ENCODE measurements at regions of chr10 and their contacts with region 1.

Region 1: GRCh38 chr10:24174014-24174413 is 34.9 kb upstream of the KIAA1217 start:
- DNase-seq: no peak
- ATAC-seq: no peak
- H3K4me3 ChIP-seq: no peak overlapping the region
- H3K27ac ChIP-seq: no peak overlapping the region
- H3K4me1 ChIP-seq: peaks cover under 1% of the 10 kb centered on the region
- H3K27me3 ChIP-seq: no peaks in the 10 kb centered on the region
- CTCF ChIP-seq: no peak

Region 2: GRCh38 chr10:23263441-23264164 is 910.4 kb before region 1 on chr10:
- intact Hi-C with region 1: no loop called
- DNase-seq: no peak
- ATAC-seq: no peak
- H3K4me3 ChIP-seq: no peak overlapping the region
- H3K27ac ChIP-seq: no peak overlapping the region
- H3K4me1 ChIP-seq: no peaks in the 10 kb centered on the region
- H3K27me3 ChIP-seq: peaks cover 0 to 2% (median 0%) of the 10 kb centered on the region in 3 donors
- CTCF ChIP-seq: no peak

Region 3: GRCh38 chr10:23742368-23742767 is 431.6 kb before region 1 on chr10:
- intact Hi-C with region 1: loop called in 1 of 2 experiments (anchors 5 kb)
- DNase-seq: no peak
- ATAC-seq: no peak
- H3K4me3 ChIP-seq: no peak overlapping the region
- H3K27ac ChIP-seq: no peak overlapping the region
- H3K4me1 ChIP-seq: no peaks in the 10 kb centered on the region
- H3K27me3 ChIP-seq: no peaks in the 10 kb centered on the region
- CTCF ChIP-seq: no peak

Region 4: DNA sequence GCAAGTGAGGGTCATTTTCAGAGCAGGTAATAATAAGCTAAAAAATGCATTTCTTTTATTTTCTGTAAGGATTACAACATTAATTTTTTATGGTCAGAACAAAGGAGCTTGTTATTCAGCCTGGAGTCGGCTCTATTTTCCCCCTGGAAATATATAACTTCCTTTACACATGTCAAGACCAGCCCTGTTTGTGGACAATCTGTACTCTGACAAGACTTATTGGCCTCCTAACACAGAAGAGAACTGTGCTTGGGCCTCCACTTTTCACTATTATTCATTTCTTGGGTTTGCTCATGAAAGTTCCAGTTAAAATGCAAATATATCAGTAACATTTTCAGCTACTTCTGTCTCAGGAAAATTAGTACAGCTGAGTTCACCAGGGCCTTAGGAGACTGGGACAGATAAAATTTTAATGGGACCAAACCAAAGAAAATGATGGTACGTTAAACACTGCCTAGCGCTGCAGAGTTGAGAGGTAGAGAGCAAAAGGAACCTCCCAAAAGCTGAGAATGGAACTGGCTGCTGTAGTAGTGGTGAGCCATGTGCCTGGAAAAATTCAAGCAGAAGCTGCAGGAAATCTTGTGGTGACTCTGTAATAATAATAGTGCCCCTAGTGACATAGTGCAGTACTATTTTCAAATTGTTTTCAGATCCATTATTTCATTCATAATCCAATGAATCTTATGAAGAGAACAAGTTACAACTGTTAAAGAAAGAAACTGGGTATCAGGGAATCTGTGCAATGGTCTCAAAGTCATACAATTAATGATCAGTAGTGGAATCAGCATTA is 192.3 kb before region 1 on chr10:
- intact Hi-C with region 1: no loop called
- DNase-seq: no peak
- ATAC-seq: no peak
- H3K4me3 ChIP-seq: no peak overlapping the region
- H3K27ac ChIP-seq: no peak overlapping the region
- H3K4me1 ChIP-seq: peaks cover 12% of the 10 kb centered on the region
- H3K27me3 ChIP-seq: no peaks in the 10 kb centered on the region
- CTCF ChIP-seq: no peak

Measured in psoas muscle (tissue), 8 donors.